Activated CD4-positive, alpha-beta T cell treated with anti-CD3 and anti-CD28 coated beads, Interleukin-2, amount 10 ng/mL, durations not matched to agents 24 days and 14 days (primary cell): ENCODE measurements at regions of chr12 and their contacts with region 1.

Region 1: GRCh38 chr12:92987362-92987761 is 58.3 kb upstream of the EEA1 start:
- DNase-seq: peak; percentile 77
- H3K4me3 Mint-ChIP-seq: peak overlapping the region; percentile 18
- H3K27ac Mint-ChIP-seq: peak overlapping the region; percentile 66
- H3K4me1 Mint-ChIP-seq: peaks cover 22% of the 10 kb centered on the region
- H3K27me3 Mint-ChIP-seq: peaks cover 3% of the 10 kb centered on the region

Region 2: GRCh38 chr12:92784795-92785562 is 202.4 kb before region 1 on chr12:
- intact Hi-C with region 1: loop called (anchors 1 kb)
- DNase-seq: peak; percentile 82
- H3K4me3 Mint-ChIP-seq: no peak overlapping the region
- H3K27ac Mint-ChIP-seq: no peak overlapping the region
- H3K4me1 Mint-ChIP-seq: peaks cover 11% of the 10 kb centered on the region
- H3K27me3 Mint-ChIP-seq: no peaks in the 10 kb centered on the region

Region 3: GRCh38 chr12:93025145-93025805 is 37.9 kb after region 1 on chr12:
- intact Hi-C with region 1: loop called (anchors 2 kb)
- DNase-seq: peak; percentile 62
- H3K4me3 Mint-ChIP-seq: no peak overlapping the region
- H3K27ac Mint-ChIP-seq: no peak overlapping the region
- H3K4me1 Mint-ChIP-seq: no peaks in the 10 kb centered on the region
- H3K27me3 Mint-ChIP-seq: peaks cover 9% of the 10 kb centered on the region

Region 4: GRCh38 chr12:93243689-93244513 is 256.5 kb after region 1 on chr12:
- intact Hi-C with region 1: loop called (anchors 10 kb)
- DNase-seq: peak; percentile 74
- H3K4me3 Mint-ChIP-seq: peak overlapping the region; percentile 78
- H3K27ac Mint-ChIP-seq: peak overlapping the region; percentile 77
- H3K4me1 Mint-ChIP-seq: peaks cover 34% of the 10 kb centered on the region
- H3K27me3 Mint-ChIP-seq: no peaks in the 10 kb centered on the region

Region 5: DNA sequence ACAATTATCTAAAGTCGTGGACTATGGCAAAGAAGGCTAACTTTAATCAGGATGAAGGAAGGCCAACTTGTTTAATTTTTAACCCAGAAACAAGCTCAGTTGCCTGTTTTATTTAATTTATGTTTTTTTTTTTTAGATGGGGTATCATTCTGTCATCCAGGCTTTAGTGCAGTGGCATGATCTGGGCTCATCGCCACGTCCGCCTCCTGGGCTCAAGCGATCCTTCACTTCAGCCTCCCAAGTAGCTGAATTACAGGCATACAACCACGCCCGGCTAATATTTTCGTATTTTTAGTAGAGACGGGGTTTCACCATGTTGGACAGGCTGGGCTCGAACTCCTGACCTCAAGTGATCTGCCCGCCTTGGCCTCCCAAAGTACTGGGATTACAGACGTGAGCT is 410.1 kb after region 1 on chr12:
- intact Hi-C with region 1: loop called (anchors 2 kb)
- DNase-seq: peak; percentile 51
- H3K4me3 Mint-ChIP-seq: no peak overlapping the region
- H3K27ac Mint-ChIP-seq: no peak overlapping the region
- H3K4me1 Mint-ChIP-seq: peaks cover 3% of the 10 kb centered on the region
- H3K27me3 Mint-ChIP-seq: no peaks in the 10 kb centered on the region

Region 6: DNA sequence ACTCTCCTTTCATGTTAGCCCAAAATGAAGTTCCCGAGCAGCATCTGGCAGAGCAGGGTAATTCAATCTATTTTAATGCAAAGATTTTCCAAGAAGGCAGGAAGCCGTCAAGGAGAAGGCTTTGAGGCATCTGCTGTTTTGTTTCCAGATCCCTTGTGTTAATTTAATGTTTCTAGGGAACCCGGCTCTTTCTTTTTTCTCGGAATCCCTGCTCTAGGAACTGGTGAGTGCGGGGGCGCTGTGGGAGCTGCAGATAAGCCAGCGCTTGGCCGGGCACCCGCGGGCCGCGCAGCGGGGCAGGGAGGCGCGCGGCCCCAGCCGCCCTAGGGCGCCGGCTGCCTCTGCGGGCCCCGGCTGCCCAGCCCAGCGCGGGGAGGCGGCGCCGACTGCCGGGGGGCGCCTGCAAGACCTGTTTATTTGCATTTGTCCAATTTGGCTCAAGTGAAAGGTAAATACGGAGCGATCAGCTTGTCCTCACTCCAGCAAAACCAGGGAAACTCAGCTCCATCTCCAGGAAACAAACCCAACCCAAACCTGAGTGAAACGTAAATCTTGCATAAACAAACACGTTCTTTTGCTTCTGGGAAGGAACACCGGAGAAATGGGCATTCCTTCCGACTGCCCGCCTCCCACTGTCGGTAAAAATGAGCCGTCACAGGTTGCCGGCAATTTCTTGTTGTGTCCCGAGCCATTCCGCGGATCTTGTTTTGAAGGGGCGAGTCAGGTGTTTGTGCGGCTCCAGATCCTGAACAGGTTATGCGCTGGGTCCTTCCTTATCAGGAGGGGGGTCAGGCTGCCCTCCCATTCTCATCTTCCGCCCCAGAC is 755.0 kb after region 1 on chr12:
- intact Hi-C with region 1: loop called (anchors 10 kb)
- DNase-seq: peak; percentile 87
- H3K4me3 Mint-ChIP-seq: peak overlapping the region; percentile 91
- H3K27ac Mint-ChIP-seq: peak overlapping the region; percentile 91
- H3K4me1 Mint-ChIP-seq: peaks cover 26% of the 10 kb centered on the region
- H3K27me3 Mint-ChIP-seq: no peaks in the 10 kb centered on the region

Region 7: GRCh38 chr12:94101738-94102660 is 1114.6 kb after region 1 on chr12:
- intact Hi-C with region 1: loop called (anchors 1 kb)
- DNase-seq: peak; percentile 96
- H3K4me3 Mint-ChIP-seq: peak overlapping the region; percentile 88
- H3K27ac Mint-ChIP-seq: peak overlapping the region; percentile 84
- H3K4me1 Mint-ChIP-seq: peaks cover 37% of the 10 kb centered on the region
- H3K27me3 Mint-ChIP-seq: peaks cover 12% of the 10 kb centered on the region